Dendritic cell treated with granulocyte-macrophage colony-stimulating factor and Interleukin-4, amounts not matched to agents 40 ng/mL and 50 ng/mL, for 4 days (primary cell): ENCODE measurements at regions of chr13 and their contacts with region 1.

Region 1: GRCh38 chr13:37074703-37075102 is 15.2 kb upstream of the SUPT20H start:
- H3K4me3 Mint-ChIP-seq: no peak overlapping the region
- H3K27ac Mint-ChIP-seq: no peak overlapping the region
- H3K4me1 Mint-ChIP-seq: no peaks in the 10 kb centered on the region
- H3K27me3 Mint-ChIP-seq: peaks cover 3% of the 10 kb centered on the region

Region 2: GRCh38 chr13:37602747-37603381 is 528.2 kb after region 1 on chr13:
- intact Hi-C with region 1: loop called (anchors 2 kb)
- H3K4me3 Mint-ChIP-seq: no peak overlapping the region
- H3K27ac Mint-ChIP-seq: no peak overlapping the region
- H3K4me1 Mint-ChIP-seq: no peaks in the 10 kb centered on the region
- H3K27me3 Mint-ChIP-seq: no peaks in the 10 kb centered on the region

Region 3: GRCh38 chr13:38582133-38582532 is 1507.4 kb after region 1 on chr13:
- intact Hi-C with region 1: loop called (anchors 5 kb)
- H3K4me3 Mint-ChIP-seq: no peak overlapping the region
- H3K27ac Mint-ChIP-seq: no peak overlapping the region
- H3K4me1 Mint-ChIP-seq: no peaks in the 10 kb centered on the region
- H3K27me3 Mint-ChIP-seq: no peaks in the 10 kb centered on the region

Region 4: GRCh38 chr13:38914070-38914469 is 1839.4 kb after region 1 on chr13:
- intact Hi-C with region 1: loop called (anchors 10 kb)
- H3K4me3 Mint-ChIP-seq: no peak overlapping the region
- H3K27ac Mint-ChIP-seq: no peak overlapping the region
- H3K4me1 Mint-ChIP-seq: no peaks in the 10 kb centered on the region
- H3K27me3 Mint-ChIP-seq: no peaks in the 10 kb centered on the region